ENCODE measurements at regions of chr2 and their contacts with region 1.

Region 1: GRCh38 chr2:210072922-210073509 is 70.6 kb downstream of the RPE start:
- DNase-seq: no peak
- H3K4me3 ChIP-seq: no peak overlapping the region
- H3K27ac ChIP-seq: no peak overlapping the region
- H3K4me1 ChIP-seq: no peaks in the 10 kb centered on the region
- H3K27me3 ChIP-seq: no peaks in the 10 kb centered on the region
- CTCF ChIP-seq: peak; percentile 7 to 74 (median 29)
- POLR2A ChIP-seq: no peak

Region 2: DNA sequence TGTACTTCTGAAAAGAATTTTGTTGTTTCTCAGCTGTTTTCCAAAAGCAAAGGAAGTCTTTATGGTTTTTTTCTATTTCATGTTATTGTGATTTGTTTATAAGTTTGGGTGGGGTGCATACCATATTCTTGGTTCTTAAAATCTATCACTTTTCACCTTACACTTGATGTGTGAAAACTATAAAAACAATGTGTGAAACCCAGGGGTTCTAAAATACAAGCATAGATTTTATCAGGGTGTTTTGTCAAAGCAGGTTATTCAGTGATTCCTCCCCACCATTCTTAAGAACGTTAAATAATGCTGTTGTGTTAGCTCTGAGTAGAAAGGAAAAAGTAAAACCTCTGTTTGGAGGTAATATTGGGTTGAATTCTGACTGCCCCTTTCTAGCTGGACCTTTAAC is 52.9 kb before region 1 on chr2:
- intact Hi-C with region 1: no loop called
- DNase-seq: no peak
- H3K4me3 ChIP-seq: no peak overlapping the region
- H3K27ac ChIP-seq: no peak overlapping the region
- H3K4me1 ChIP-seq: no peaks in the 10 kb centered on the region
- H3K27me3 ChIP-seq: no peaks in the 10 kb centered on the region
- CTCF ChIP-seq: no peak
- POLR2A ChIP-seq: no peak

Region 3: DNA sequence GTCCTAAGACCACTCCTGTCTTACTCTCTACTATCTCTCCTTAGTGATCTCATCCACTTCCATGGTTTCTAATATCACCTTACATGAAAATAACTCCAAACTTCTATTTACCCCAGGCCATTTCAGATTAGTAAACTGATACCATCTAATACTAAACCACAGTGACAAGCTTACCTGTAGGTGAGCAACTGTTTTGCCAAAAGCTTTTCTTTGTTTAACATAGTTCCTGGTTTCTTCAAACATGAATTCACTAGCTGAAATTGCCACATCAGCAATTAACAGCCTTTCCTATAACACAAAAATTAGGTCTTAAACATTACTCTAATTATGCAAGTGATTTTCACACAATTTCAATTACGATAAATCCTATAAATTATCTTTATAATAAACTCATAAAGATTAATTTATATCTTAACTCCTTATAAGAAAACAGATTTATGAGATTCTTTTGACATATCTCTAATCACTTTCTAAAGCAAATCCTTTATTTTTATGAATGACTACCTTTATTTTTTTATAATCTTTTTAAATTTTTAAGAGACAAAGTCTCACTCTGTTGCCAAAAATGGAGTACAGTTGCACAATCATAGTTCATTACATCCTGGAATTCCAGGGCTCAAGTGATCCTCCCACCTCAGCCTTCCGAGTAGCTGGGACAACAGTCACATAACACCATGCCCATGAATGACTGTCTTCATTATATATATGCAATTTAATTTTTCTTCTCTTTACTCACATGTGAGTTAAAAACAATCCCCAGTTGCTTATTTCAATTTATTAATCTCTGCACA is 130.3 kb after region 1 on chr2:
- intact Hi-C with region 1: loop called (anchors 10 kb)
- DNase-seq: no peak
- H3K4me3 ChIP-seq: no peak overlapping the region
- H3K27ac ChIP-seq: no peak overlapping the region
- H3K4me1 ChIP-seq: no peaks in the 10 kb centered on the region
- H3K27me3 ChIP-seq: no peaks in the 10 kb centered on the region
- CTCF ChIP-seq: no peak
- POLR2A ChIP-seq: no peak